ENCODE measurements at regions of chr3 and their contacts with region 1.

Region 1: DNA sequence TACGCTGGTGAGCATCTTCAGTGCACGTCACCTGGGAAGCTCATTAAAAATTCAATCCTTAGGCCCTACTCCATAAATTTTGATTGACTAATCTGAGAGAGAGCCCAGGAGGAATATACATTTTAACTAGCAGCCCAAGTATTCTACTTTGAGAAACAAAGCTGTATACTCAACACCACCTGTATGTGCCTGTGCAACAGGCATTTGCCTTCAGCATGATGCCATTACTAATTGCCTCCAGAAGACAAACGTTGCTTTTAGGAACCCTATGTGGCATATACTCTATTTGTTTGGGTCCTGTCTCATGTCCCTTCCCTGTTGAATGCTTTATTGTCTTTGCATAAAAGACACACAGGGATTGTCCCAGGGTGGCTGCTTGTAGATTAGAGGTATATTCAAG is 7.7 kb downstream of the ASTE1 start:
- DNase-seq: no peak
- H3K4me3 ChIP-seq: no peak overlapping the region
- H3K4me3 Mint-ChIP-seq: no peak overlapping the region
- H3K27ac Mint-ChIP-seq: no peak overlapping the region
- H3K4me1 ChIP-seq: no peaks in the 10 kb centered on the region
- H3K4me1 Mint-ChIP-seq: peaks cover 6% of the 10 kb centered on the region
- H3K27me3 ChIP-seq: no peaks in the 10 kb centered on the region
- H3K27me3 Mint-ChIP-seq: no peaks in the 10 kb centered on the region
- CTCF ChIP-seq: no peak

Region 2: DNA sequence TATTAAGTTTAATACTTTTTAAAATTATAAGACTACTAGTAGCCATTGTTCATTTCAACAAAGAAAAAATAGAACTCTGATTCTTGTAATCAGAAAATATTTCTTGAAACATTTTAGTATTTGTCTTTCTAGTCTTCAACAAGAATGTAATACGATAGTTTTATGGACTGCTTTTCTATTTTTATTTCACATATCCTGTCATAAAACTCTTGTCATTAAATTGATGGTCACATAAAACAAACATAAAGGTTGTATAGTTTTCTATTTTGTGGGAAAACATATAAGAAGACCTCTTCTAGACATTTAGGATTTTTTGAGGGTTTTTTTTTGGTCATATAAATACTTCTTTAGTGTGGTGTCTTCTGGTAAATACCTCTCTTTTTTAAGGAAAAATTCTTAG is 62.7 kb before region 1 on chr3:
- CTCF ChIA-PET with region 1: no interaction called
- POLR2A ChIA-PET with region 1: no interaction called
- intact Hi-C with region 1: no loop called
- DNase-seq: no peak
- H3K4me3 ChIP-seq: no peak overlapping the region
- H3K4me3 Mint-ChIP-seq: no peak overlapping the region
- H3K27ac Mint-ChIP-seq: no peak overlapping the region
- H3K4me1 ChIP-seq: no peaks in the 10 kb centered on the region
- H3K4me1 Mint-ChIP-seq: no peaks in the 10 kb centered on the region
- H3K27me3 ChIP-seq: no peaks in the 10 kb centered on the region
- H3K27me3 Mint-ChIP-seq: no peaks in the 10 kb centered on the region
- CTCF ChIP-seq: no peak

Region 3: GRCh38 chr3:130968221-130968620 is 50.7 kb before region 1 on chr3:
- CTCF ChIA-PET with region 1: no interaction called
- POLR2A ChIA-PET with region 1: no interaction called
- intact Hi-C with region 1: loop called (anchors 5 kb)
- DNase-seq: peak in 1 of 2 experiments; percentile 5
- H3K4me3 ChIP-seq: no peak overlapping the region
- H3K4me3 Mint-ChIP-seq: peak overlapping the region; percentile 29
- H3K27ac Mint-ChIP-seq: peak overlapping the region; percentile 83
- H3K4me1 ChIP-seq: peaks cover 51% of the 10 kb centered on the region
- H3K4me1 Mint-ChIP-seq: peaks cover 32% of the 10 kb centered on the region
- H3K27me3 ChIP-seq: no peaks in the 10 kb centered on the region
- H3K27me3 Mint-ChIP-seq: no peaks in the 10 kb centered on the region
- CTCF ChIP-seq: no peak